ENCODE measurements at regions of chr4 and their contacts with region 1.

Region 1: GRCh38 chr4:53702334-53703266 is 111.3 kb upstream of the LNX1 start:
- DNase-seq: peak; percentile 71
- H3K4me3 ChIP-seq: peak overlapping the region in 2 of 3 experiments; percentile 2 to 13
- H3K27ac ChIP-seq: peak overlapping the region; percentile 10
- H3K4me1 ChIP-seq: peaks cover 19% of the 10 kb centered on the region
- H3K27me3 ChIP-seq: no peaks in the 10 kb centered on the region
- CTCF ChIP-seq: peak in 1 of 2 donors; percentile 8
- POLR2A ChIP-seq: no peak

Region 2: GRCh38 chr4:52627876-52628275 is 1074.7 kb before region 1 on chr4:
- CTCF ChIA-PET with region 1: no interaction called
- POLR2A ChIA-PET with region 1: no interaction called
- dilution Hi-C with region 1: no loop called
- intact Hi-C with region 1: no loop called
- DNase-seq: no peak
- H3K4me3 ChIP-seq: no peak overlapping the region
- H3K27ac ChIP-seq: no peak overlapping the region
- H3K4me1 ChIP-seq: no peaks in the 10 kb centered on the region
- H3K27me3 ChIP-seq: no peaks in the 10 kb centered on the region
- CTCF ChIP-seq: no peak
- POLR2A ChIP-seq: no peak

Region 3: DNA sequence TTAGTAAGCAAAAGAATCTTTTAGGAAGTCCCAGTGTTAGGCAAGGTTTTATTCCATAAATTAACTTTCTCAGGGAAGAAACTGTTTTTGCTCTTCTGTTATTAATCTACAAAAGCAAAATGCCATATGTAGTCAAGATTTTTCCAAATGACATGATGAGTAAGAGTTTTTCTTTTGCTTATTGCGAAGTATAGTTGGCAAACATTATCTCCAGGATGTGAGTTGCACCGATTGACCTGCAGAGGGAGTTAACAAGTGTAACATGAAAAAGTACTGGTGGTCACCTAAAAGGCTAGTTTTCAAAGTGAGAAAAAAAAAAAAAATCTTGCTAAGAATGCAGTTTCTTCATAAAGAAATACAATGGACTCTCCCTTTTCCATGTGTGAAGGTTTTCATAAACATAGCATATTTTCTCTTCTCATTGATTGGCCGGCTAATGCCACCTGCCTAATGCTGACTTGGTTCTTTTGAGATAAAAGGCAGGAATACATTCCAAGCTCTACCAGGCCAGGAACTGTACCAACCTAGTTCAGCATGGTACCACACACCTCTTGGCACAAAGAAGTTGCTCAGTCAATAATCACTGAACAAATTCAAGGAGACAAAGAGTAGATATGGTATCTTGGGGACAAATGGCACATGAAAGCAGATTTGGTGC is 211.5 kb before region 1 on chr4:
- CTCF ChIA-PET with region 1: interaction called, 15 read pairs
- POLR2A ChIA-PET with region 1: no interaction called
- dilution Hi-C with region 1: no loop called
- intact Hi-C with region 1: no loop called
- DNase-seq: peak; percentile 85
- H3K4me3 ChIP-seq: no peak overlapping the region
- H3K27ac ChIP-seq: no peak overlapping the region
- H3K4me1 ChIP-seq: peaks cover 6% of the 10 kb centered on the region
- H3K27me3 ChIP-seq: no peaks in the 10 kb centered on the region
- CTCF ChIP-seq: peak; percentile 52 to 55
- POLR2A ChIP-seq: no peak

Region 4: GRCh38 chr4:53717064-53717549 is 14.5 kb after region 1 on chr4:
- CTCF ChIA-PET with region 1: interaction called, 14 read pairs
- POLR2A ChIA-PET with region 1: no interaction called
- dilution Hi-C with region 1: no loop called
- intact Hi-C with region 1: no loop called
- DNase-seq: no peak
- H3K4me3 ChIP-seq: no peak overlapping the region
- H3K27ac ChIP-seq: no peak overlapping the region
- H3K4me1 ChIP-seq: no peaks in the 10 kb centered on the region
- H3K27me3 ChIP-seq: peaks cover 6 to 15% of the 10 kb centered on the region in 2 experiments
- CTCF ChIP-seq: no peak
- POLR2A ChIP-seq: no peak

Region 5: DNA sequence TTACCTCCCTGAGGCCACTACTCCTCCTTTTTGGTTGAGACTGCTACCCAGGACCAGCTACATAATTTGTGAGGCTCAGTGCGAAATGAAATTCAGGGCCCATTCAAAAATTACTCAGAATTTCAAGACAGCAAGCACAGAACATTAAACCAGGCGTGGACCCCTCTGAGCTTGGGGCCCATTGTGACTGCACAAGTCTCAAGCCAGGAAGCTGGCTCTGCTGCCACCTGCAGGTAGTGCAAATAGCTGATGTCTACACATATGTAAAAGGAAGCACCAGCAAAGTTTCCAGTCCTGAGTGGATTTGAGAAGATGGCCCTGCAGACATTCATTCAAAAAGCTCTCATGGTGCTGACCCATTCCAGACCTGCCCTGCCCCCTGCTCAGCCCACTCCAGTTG is 102.1 kb after region 1 on chr4:
- CTCF ChIA-PET with region 1: interaction called, 10 read pairs
- POLR2A ChIA-PET with region 1: no interaction called
- dilution Hi-C with region 1: no loop called
- intact Hi-C with region 1: no loop called
- DNase-seq: peak; percentile 11
- H3K4me3 ChIP-seq: no peak overlapping the region
- H3K27ac ChIP-seq: no peak overlapping the region
- H3K4me1 ChIP-seq: no peaks in the 10 kb centered on the region
- H3K27me3 ChIP-seq: peaks cover 4 to 17% of the 10 kb centered on the region in 2 experiments
- CTCF ChIP-seq: peak; percentile 30 to 33
- POLR2A ChIP-seq: no peak

Region 6: GRCh38 chr4:53908661-53909078 is 206.1 kb after region 1 on chr4:
- CTCF ChIA-PET with region 1: interaction called, 13 read pairs
- POLR2A ChIA-PET with region 1: no interaction called
- dilution Hi-C with region 1: no loop called
- intact Hi-C with region 1: no loop called
- DNase-seq: peak; percentile 87
- H3K4me3 ChIP-seq: no peak overlapping the region
- H3K27ac ChIP-seq: no peak overlapping the region
- H3K4me1 ChIP-seq: peaks cover 3% of the 10 kb centered on the region
- H3K27me3 ChIP-seq: peaks cover 26% of the 10 kb centered on the region in 2 experiments
- CTCF ChIP-seq: peak; percentile 77 to 85
- POLR2A ChIP-seq: no peak

Region 7: GRCh38 chr4:54217642-54218495 is 515.3 kb after region 1 on chr4:
- CTCF ChIA-PET with region 1: interaction called, 16 read pairs
- POLR2A ChIA-PET with region 1: no interaction called
- dilution Hi-C with region 1: no loop called
- intact Hi-C with region 1: no loop called
- DNase-seq: peak; percentile 84
- H3K4me3 ChIP-seq: peak overlapping the region; percentile 34 to 78 (median 58)
- H3K27ac ChIP-seq: peak overlapping the region; percentile 30
- H3K4me1 ChIP-seq: peaks cover 2% of the 10 kb centered on the region
- H3K27me3 ChIP-seq: peaks cover 2 to 7% of the 10 kb centered on the region in 2 experiments
- CTCF ChIP-seq: peak; percentile 82 to 84
- POLR2A ChIP-seq: no peak

Region 8: DNA sequence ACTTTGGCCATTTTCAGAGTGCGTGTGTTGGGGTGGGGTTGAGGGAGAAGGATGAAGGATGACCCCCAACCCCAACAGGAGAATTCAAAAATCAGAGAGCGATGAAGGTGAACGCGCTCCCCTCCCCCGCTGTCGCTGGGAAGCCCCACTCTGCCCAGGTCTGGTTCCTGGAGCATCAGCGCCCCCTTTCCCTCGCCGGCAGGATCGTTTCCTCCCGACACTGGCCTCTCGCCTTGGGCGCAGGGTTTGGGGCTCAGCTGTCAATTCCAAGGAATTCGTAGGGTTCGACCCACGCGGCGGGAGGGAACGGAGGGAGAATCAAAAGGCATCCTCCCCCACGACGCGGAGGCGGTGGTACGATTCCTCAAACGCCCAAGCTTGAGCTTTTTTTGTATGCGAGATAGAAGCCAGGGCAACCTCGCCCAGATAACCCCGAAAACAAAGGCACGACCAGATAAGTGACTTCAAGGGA is 525.5 kb after region 1 on chr4:
- CTCF ChIA-PET with region 1: interaction called, 80 read pairs
- POLR2A ChIA-PET with region 1: no interaction called
- dilution Hi-C with region 1: no loop called
- intact Hi-C with region 1: loop called (anchors 2 kb)
- DNase-seq: no peak
- H3K4me3 ChIP-seq: peak overlapping the region; percentile 15 to 52 (median 19)
- H3K27ac ChIP-seq: no peak overlapping the region
- H3K4me1 ChIP-seq: peaks cover 41% of the 10 kb centered on the region
- H3K27me3 ChIP-seq: peaks cover 65 to 78% of the 10 kb centered on the region in 2 experiments
- CTCF ChIP-seq: peak; percentile 72 to 88
- POLR2A ChIP-seq: no peak